Gastrocnemius medialis (tissue), 4 donors: ENCODE measurements at regions of chr14 and their contacts with region 1.

Region 1: GRCh38 chr14:31207755-31208545 is at the start of gene HECTD1:
- DNase-seq: peak; percentile 59 to 74
- ATAC-seq: peak; percentile 83 to 87
- H3K4me3 ChIP-seq: peak within 1 kb of the TSS; percentile 83 to 90 (median 88)
- H3K27ac ChIP-seq: peak within 1 kb of the TSS; percentile 96 to 99 (median 99)
- H3K4me1 ChIP-seq: peaks cover 18 to 32% of the 10 kb centered on the region in 2 donors
- H3K27me3 ChIP-seq: no peaks in the 10 kb centered on the region
- CTCF ChIP-seq: peak; percentile 30 to 96 (median 92)
- POLR2A ChIP-seq: peak; percentile 56 to 66
- total RNA-seq, gene HECTD1: 356 to 453 (median 420) TPM

Region 2: GRCh38 chr14:30988509-30988908 is 219.4 kb before region 1 on chr14:
- in situ Hi-C with region 1: no loop called
- intact Hi-C with region 1: loop called (anchors 10 kb)
- DNase-seq: no peak
- ATAC-seq: peak in 1 of 2 donors; percentile 57
- H3K4me3 ChIP-seq: no peak overlapping the region
- H3K27ac ChIP-seq: peak overlapping the region in 3 of 4 donors; percentile 4 to 53 (median 45)
- H3K4me1 ChIP-seq: peaks cover 10 to 38% of the 10 kb centered on the region in 2 donors
- H3K27me3 ChIP-seq: no peaks in the 10 kb centered on the region
- CTCF ChIP-seq: no peak
- POLR2A ChIP-seq: no peak

Region 3: GRCh38 chr14:31090883-31091764 is 116.8 kb before region 1 on chr14:
- in situ Hi-C with region 1: no loop called
- intact Hi-C with region 1: loop called (anchors 2 kb)
- DNase-seq: peak; percentile 79 to 80
- ATAC-seq: peak; percentile 94 to 97
- H3K4me3 ChIP-seq: peak overlapping the region in 1 of 4 donors; percentile 20
- H3K27ac ChIP-seq: peak overlapping the region; percentile 84 to 95 (median 92)
- H3K4me1 ChIP-seq: peaks cover 22 to 30% of the 10 kb centered on the region in 2 donors
- H3K27me3 ChIP-seq: no peaks in the 10 kb centered on the region
- CTCF ChIP-seq: no peak
- POLR2A ChIP-seq: peak; percentile 17 to 52

Region 4: GRCh38 chr14:31172084-31172483 is 35.9 kb before region 1 on chr14:
- in situ Hi-C with region 1: no loop called
- intact Hi-C with region 1: no loop called
- DNase-seq: no peak
- ATAC-seq: peak; percentile 68 to 72
- H3K4me3 ChIP-seq: no peak overlapping the region
- H3K27ac ChIP-seq: peak overlapping the region; percentile 64 to 76 (median 68)
- H3K4me1 ChIP-seq: peaks cover 5 to 14% of the 10 kb centered on the region in 2 donors
- H3K27me3 ChIP-seq: no peaks in the 10 kb centered on the region
- CTCF ChIP-seq: no peak
- POLR2A ChIP-seq: no peak

Region 5: GRCh38 chr14:31229638-31230229 is 21.8 kb after region 1 on chr14:
- in situ Hi-C with region 1: no loop called
- intact Hi-C with region 1: loop called (anchors 2 kb)
- DNase-seq: peak; percentile 86 to 92
- ATAC-seq: peak; percentile 99 to 100
- H3K4me3 ChIP-seq: no peak overlapping the region
- H3K27ac ChIP-seq: peak overlapping the region; percentile 83 to 89 (median 86)
- H3K4me1 ChIP-seq: peaks cover 9 to 24% of the 10 kb centered on the region in 2 donors
- H3K27me3 ChIP-seq: no peaks in the 10 kb centered on the region
- CTCF ChIP-seq: no peak
- POLR2A ChIP-seq: peak; percentile 50 to 68

Region 6: DNA sequence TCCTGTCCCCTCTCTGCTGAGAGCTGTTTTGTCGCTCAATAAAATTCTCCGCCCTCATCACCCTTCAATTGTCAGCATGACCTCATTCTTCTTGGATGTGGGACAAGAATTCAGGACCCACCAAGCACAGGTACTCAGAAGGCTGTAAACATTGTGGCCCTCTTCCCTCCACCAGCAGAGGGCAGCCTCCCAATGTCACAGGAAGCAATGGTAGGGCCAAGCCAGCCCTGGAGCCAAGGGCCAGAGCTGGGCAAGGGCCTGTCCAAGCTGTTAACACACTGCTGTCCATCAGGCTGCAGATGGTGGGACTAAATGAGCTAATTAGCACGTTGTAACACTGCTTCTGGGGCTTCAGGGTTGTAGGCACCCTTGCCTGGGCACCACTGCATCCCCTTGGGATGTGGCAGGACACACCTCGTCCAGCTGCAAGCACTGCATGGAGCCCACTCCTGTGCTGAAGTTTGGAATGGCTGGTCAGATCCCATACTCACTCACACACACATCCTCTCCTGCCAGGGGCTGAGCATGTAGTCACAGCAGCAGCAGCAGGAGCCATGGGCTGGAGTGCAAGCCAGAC is 62.3 kb after region 1 on chr14:
- in situ Hi-C with region 1: no loop called
- intact Hi-C with region 1: no loop called
- DNase-seq: no peak
- ATAC-seq: no peak
- H3K4me3 ChIP-seq: no peak overlapping the region
- H3K27ac ChIP-seq: no peak overlapping the region
- H3K4me1 ChIP-seq: no peaks in the 10 kb centered on the region
- H3K27me3 ChIP-seq: no peaks in the 10 kb centered on the region
- CTCF ChIP-seq: peak in 1 of 5 experiments; percentile 26
- POLR2A ChIP-seq: no peak

Region 7: GRCh38 chr14:31326111-31326510 is 118.2 kb after region 1 on chr14:
- in situ Hi-C with region 1: loop called in 1 of 4 experiments (anchors 25 kb)
- intact Hi-C with region 1: no loop called
- DNase-seq: no peak
- ATAC-seq: no peak
- H3K4me3 ChIP-seq: no peak overlapping the region
- H3K27ac ChIP-seq: no peak overlapping the region
- H3K4me1 ChIP-seq: peaks cover 3% of the 10 kb centered on the region in 2 donors
- H3K27me3 ChIP-seq: no peaks in the 10 kb centered on the region
- CTCF ChIP-seq: no peak
- POLR2A ChIP-seq: no peak

Region 8: GRCh38 chr14:31360919-31361662 is 153.1 kb after region 1 on chr14:
- in situ Hi-C with region 1: loop called in 3 of 4 experiments (anchors 5 to 10 kb)
- intact Hi-C with region 1: loop called (anchors 5 kb)
- DNase-seq: no peak
- ATAC-seq: no peak
- H3K4me3 ChIP-seq: no peak overlapping the region
- H3K27ac ChIP-seq: no peak overlapping the region
- H3K4me1 ChIP-seq: peaks cover 0 to 3% of the 10 kb centered on the region in 2 donors
- H3K27me3 ChIP-seq: no peaks in the 10 kb centered on the region
- CTCF ChIP-seq: no peak
- POLR2A ChIP-seq: no peak

Region 9: DNA sequence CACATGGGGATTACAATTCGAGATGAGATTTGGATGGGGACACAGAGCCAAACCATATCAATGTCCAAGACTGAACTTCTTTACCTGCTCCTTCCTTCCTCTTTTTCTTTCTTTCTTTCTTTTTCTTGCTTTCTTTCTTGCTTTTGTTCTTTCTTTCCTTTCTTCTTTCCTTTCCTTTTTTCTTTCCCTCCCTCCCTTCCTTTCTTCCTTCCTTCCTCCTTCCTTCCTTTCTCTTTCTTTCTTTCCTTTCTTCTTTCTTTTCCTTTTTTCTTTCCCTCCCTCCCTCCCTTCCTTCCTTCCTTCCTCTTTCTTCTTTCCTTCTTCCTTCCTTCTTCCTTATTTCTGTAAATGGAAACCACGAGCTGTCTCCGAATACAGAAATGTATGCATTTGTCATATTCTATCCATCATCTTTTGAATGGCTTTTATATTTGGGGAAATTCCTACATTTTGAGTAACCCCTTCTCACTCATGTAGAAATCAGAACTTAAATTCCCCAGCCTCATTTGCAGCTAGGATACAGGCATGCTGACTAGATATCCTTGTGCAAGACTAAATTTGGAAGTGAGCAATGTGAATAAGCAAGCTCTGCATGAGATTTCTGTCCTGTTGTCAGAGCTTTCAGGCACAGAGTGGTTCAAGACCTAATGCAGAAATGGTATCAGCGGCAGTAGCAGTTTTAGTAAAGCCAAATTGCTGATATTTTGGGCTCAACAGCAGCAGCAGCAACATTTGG is 268.3 kb after region 1 on chr14:
- in situ Hi-C with region 1: no loop called
- intact Hi-C with region 1: no loop called
- DNase-seq: no peak
- ATAC-seq: no peak
- H3K4me3 ChIP-seq: no peak overlapping the region
- H3K27ac ChIP-seq: no peak overlapping the region
- H3K4me1 ChIP-seq: no peaks in the 10 kb centered on the region
- H3K27me3 ChIP-seq: no peaks in the 10 kb centered on the region
- CTCF ChIP-seq: no peak
- POLR2A ChIP-seq: no peak

Region 10: GRCh38 chr14:32076278-32077080 is 868.5 kb after region 1 on chr14:
- in situ Hi-C with region 1: no loop called
- intact Hi-C with region 1: loop called (anchors 5 kb)
- DNase-seq: peak; percentile 93 to 96
- ATAC-seq: peak; percentile 87 to 89
- H3K4me3 ChIP-seq: peak overlapping the region; percentile 89 to 99 (median 96)
- H3K27ac ChIP-seq: peak overlapping the region; percentile 98 to 100 (median 100)
- H3K4me1 ChIP-seq: peaks cover 27 to 42% of the 10 kb centered on the region in 2 donors
- H3K27me3 ChIP-seq: no peaks in the 10 kb centered on the region
- CTCF ChIP-seq: no peak
- POLR2A ChIP-seq: peak; percentile 64 to 65